ENCODE measurements at regions of chr1 and their contacts with region 1.

Region 1: DNA sequence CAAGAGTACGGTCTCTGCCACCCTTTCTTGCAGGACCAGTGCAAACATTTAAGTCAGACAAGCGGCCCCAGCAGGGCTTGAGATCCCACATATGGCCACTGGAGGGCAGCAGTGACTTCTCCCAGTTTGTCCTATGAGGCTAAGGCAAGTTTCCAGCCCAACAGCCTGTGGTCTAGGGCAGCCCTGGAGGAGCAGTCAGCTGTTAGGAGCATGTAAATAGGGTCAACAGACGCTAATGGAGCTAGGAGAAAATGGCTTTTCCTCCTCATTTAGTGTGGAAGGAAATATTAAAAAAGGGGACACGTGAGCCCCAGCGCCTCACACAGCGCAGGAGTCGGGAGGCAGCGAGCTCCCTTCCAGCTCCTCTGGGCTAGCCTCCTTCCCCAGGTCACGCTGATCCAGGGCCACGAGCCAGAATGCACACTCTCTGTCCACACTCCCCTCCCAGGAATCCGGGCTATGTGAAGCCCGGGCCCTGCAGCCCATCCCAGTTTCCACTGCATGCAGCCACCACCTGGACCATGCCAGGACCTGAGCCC is 95.6 kb downstream of the LAMC2 start:
- DNase-seq: peak; percentile 88
- ATAC-seq: peak; percentile 90
- H3K4me3 ChIP-seq: no peak overlapping the region
- H3K27ac ChIP-seq: no peak overlapping the region
- H3K4me1 ChIP-seq: no peaks in the 10 kb centered on the region; the same call in 1 of the 2 replicates
- H3K27me3 ChIP-seq: no peaks in the 10 kb centered on the region
- CTCF ChIP-seq: peak; percentile 96

Region 2: DNA sequence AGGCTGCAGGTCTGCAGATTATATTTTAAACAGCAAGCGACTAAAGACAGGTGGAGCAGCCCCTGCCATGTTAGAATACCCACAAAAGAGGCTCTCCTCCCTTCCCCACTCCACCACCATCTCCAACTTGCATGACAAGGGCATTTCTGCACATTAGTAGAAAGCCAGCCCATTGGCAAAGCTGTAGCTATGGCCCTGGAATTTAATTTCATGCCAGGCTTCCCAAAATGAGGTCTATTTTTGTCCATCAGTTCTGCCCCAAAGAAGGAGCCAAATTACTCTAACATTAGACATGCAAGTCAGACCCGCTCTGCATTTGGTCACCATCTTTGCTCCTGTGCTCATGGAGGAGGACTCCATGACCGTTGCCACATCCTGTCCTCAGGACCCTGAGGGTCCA is 19.6 kb after region 1 on chr1:
- CTCF ChIA-PET with region 1: no interaction called
- POLR2A ChIA-PET with region 1: no interaction called
- in situ Hi-C with region 1: no loop called
- intact Hi-C with region 1: no loop called
- DNase-seq: no peak
- ATAC-seq: no peak
- H3K4me3 ChIP-seq: no peak overlapping the region
- H3K27ac ChIP-seq: no peak overlapping the region
- H3K4me1 ChIP-seq: no peaks in the 10 kb centered on the region
- H3K27me3 ChIP-seq: no peaks in the 10 kb centered on the region
- CTCF ChIP-seq: no peak

Region 3: GRCh38 chr1:183385340-183386144 is 103.9 kb after region 1 on chr1:
- CTCF ChIA-PET with region 1: no interaction called
- POLR2A ChIA-PET with region 1: no interaction called
- in situ Hi-C with region 1: no loop called
- intact Hi-C with region 1: no loop called
- DNase-seq: no peak
- ATAC-seq: no peak
- H3K4me3 ChIP-seq: no peak overlapping the region
- H3K27ac ChIP-seq: no peak overlapping the region
- H3K4me1 ChIP-seq: no peaks in the 10 kb centered on the region
- H3K27me3 ChIP-seq: peaks cover 7% of the 10 kb centered on the region; the same call in 1 of the 2 replicates
- CTCF ChIP-seq: no peak

Region 4: GRCh38 chr1:183454390-183454789 is 172.8 kb after region 1 on chr1:
- CTCF ChIA-PET with region 1: no interaction called
- POLR2A ChIA-PET with region 1: no interaction called
- in situ Hi-C with region 1: no loop called
- intact Hi-C with region 1: loop called (anchors 10 kb)
- DNase-seq: no peak
- ATAC-seq: no peak
- H3K4me3 ChIP-seq: no peak overlapping the region
- H3K27ac ChIP-seq: no peak overlapping the region
- H3K4me1 ChIP-seq: no peaks in the 10 kb centered on the region; the same call in 1 of the 2 replicates
- H3K27me3 ChIP-seq: peaks cover 7% of the 10 kb centered on the region
- CTCF ChIP-seq: no peak

Region 5: GRCh38 chr1:183543619-183544204 is 262.1 kb after region 1 on chr1:
- CTCF ChIA-PET with region 1: no interaction called
- POLR2A ChIA-PET with region 1: no interaction called
- in situ Hi-C with region 1: no loop called
- intact Hi-C with region 1: loop called (anchors 10 kb)
- DNase-seq: peak; percentile 22
- ATAC-seq: peak; percentile 97
- H3K4me3 ChIP-seq: no peak overlapping the region
- H3K27ac ChIP-seq: no peak overlapping the region
- H3K4me1 ChIP-seq: no peaks in the 10 kb centered on the region
- H3K27me3 ChIP-seq: no peaks in the 10 kb centered on the region
- CTCF ChIP-seq: peak; percentile 78

Region 6: GRCh38 chr1:183622884-183623785 is 341.5 kb after region 1 on chr1:
- CTCF ChIA-PET with region 1: no interaction called
- POLR2A ChIA-PET with region 1: no interaction called
- in situ Hi-C with region 1: no loop called
- intact Hi-C with region 1: loop called (anchors 5 kb)
- DNase-seq: no peak
- ATAC-seq: peak; percentile 96
- H3K4me3 ChIP-seq: no peak overlapping the region
- H3K27ac ChIP-seq: no peak overlapping the region
- H3K4me1 ChIP-seq: no peaks in the 10 kb centered on the region
- H3K27me3 ChIP-seq: no peaks in the 10 kb centered on the region
- CTCF ChIP-seq: peak; percentile 77

Measured in Panc1 (cell line).